Endothelial cell of umbilical vein (primary cell): ENCODE measurements at regions of chr19 and their contacts with region 1.

Region 1: GRCh38 chr19:17135001-17135853 is 59.6 kb downstream of the MYO9B start:
- DNase-seq: peak; percentile 99
- H3K4me3 ChIP-seq: peak overlapping the region in 1 of 3 experiments; percentile 15
- H3K27ac ChIP-seq: peak overlapping the region; percentile 98
- H3K4me1 ChIP-seq: peaks cover 24% of the 10 kb centered on the region
- H3K27me3 ChIP-seq: no peaks in the 10 kb centered on the region
- CTCF ChIP-seq: peak; percentile 11 to 26
- POLR2A ChIP-seq: peak; percentile 39

Region 2: DNA sequence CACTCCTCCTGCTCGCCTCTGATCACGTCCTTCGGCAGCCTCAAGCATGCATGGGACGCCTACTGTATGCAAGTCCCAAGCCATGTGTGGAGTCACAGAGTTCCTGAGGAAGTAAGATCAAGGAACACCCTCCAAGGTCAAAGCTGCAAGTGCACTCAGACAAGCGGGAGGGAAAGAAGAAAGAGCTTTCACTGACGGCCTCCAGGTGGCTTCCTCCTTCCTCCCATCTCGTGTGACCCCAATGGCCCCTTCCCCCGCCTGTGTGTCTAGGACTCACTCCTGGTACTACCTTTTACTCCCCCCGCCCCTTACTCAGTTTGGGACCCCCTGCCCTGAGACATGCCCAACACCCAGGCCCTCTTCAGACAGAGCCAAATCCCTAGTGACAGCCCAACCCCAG is 66.0 kb before region 1 on chr19:
- CTCF ChIA-PET with region 1: no interaction called
- POLR2A ChIA-PET with region 1: no interaction called
- dilution Hi-C with region 1: no loop called
- intact Hi-C with region 1: loop called (anchors 2 kb)
- DNase-seq: no peak
- H3K4me3 ChIP-seq: no peak overlapping the region
- H3K27ac ChIP-seq: no peak overlapping the region
- H3K4me1 ChIP-seq: peaks cover 8% of the 10 kb centered on the region
- H3K27me3 ChIP-seq: no peaks in the 10 kb centered on the region
- CTCF ChIP-seq: no peak
- POLR2A ChIP-seq: no peak

Region 3: DNA sequence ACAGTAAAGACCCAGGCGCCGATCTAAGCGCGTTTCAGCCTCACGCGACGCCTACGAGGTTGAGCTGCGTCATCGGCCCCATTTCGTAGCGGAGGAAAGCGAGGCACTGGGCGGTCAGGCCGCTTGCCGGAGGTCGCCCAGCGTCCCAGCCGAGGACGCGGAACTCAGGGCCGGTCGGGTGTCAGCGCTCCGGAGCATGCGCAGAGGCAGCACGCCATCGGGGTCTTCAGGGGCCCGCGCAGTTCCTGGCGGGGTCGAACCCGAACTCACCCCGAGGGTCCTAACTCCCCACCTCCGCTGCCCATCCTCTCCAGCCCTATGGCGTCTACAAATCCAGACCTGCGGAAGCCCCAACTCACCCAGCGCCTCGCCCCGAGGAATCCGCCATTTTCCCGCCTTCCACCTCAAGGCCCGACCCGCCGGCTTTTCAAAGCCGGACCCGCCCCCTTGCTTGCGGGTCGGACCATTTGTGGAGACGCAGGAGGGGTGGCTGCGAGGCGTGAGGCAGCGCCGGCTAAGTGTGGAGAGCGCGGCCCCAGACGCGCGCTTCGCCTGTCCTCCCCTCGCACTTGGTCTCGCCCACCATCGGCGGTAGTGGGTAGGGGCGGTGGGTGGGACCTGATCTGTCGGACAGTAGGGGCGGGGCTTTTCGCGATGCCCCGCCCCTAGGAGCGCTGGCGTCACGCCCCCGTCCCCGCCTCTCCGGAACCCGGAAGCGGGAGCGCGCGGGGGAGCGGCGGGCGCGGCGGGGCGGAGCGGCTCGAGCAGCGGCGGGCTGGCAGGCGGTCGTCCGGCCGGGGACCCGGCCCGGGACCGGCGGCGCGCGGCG is 60.0 kb before region 1 on chr19 and contains the starts of genes HAUS8 and MYO9B:
- CTCF ChIA-PET with region 1: no interaction called
- POLR2A ChIA-PET with region 1: no interaction called
- dilution Hi-C with region 1: no loop called
- intact Hi-C with region 1: loop called (anchors 1 kb)
- DNase-seq: peak; percentile 99
- H3K4me3 ChIP-seq: peak within 1 kb of the TSS; percentile 80 to 90 (median 89)
- H3K27ac ChIP-seq: peak within 1 kb of the TSS; percentile 75
- H3K4me1 ChIP-seq: peaks cover 41% of the 10 kb centered on the region
- H3K27me3 ChIP-seq: no peaks in the 10 kb centered on the region
- CTCF ChIP-seq: no peak
- POLR2A ChIP-seq: peak; percentile 72
- total RNA-seq, gene HAUS8: 23.4 and 30.3 TPM in 2 replicates
- total RNA-seq, gene MYO9B: 119 and 124 TPM in 2 replicates

Region 4: DNA sequence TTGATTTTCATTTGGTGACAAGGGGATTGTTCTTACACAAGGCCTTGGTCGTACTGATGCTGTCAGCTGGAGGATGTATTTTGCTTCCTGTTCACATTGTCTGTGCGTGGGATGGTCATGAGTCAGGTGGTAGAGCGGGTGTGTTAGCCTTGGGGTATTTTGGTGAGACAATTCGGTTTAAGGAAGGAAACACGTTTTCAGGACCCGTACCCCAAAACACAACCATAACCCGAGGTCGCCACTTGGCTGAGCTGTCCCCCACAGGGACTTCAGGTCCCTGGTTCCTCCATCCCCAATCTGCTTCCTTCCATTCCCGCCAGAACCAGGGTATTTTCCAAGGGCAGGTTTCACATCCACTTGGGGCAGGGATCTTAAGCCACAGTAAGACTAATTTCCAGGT is 44.6 kb before region 1 on chr19:
- CTCF ChIA-PET with region 1: no interaction called
- POLR2A ChIA-PET with region 1: interaction called, 10 read pairs
- dilution Hi-C with region 1: no loop called
- intact Hi-C with region 1: no loop called
- DNase-seq: no peak
- H3K4me3 ChIP-seq: no peak overlapping the region
- H3K27ac ChIP-seq: peak overlapping the region; percentile 4
- H3K4me1 ChIP-seq: peaks cover 23% of the 10 kb centered on the region
- H3K27me3 ChIP-seq: no peaks in the 10 kb centered on the region
- CTCF ChIP-seq: no peak
- POLR2A ChIP-seq: no peak

Region 5: GRCh38 chr19:17107525-17108452 is 27.4 kb before region 1 on chr19:
- CTCF ChIA-PET with region 1: interaction called, 3 read pairs
- POLR2A ChIA-PET with region 1: no interaction called
- dilution Hi-C with region 1: no loop called
- intact Hi-C with region 1: loop called (anchors 1 kb)
- DNase-seq: peak; percentile 96
- H3K4me3 ChIP-seq: no peak overlapping the region
- H3K27ac ChIP-seq: peak overlapping the region; percentile 80
- H3K4me1 ChIP-seq: peaks cover 11% of the 10 kb centered on the region
- H3K27me3 ChIP-seq: no peaks in the 10 kb centered on the region
- CTCF ChIP-seq: no peak
- POLR2A ChIP-seq: no peak

Region 6: DNA sequence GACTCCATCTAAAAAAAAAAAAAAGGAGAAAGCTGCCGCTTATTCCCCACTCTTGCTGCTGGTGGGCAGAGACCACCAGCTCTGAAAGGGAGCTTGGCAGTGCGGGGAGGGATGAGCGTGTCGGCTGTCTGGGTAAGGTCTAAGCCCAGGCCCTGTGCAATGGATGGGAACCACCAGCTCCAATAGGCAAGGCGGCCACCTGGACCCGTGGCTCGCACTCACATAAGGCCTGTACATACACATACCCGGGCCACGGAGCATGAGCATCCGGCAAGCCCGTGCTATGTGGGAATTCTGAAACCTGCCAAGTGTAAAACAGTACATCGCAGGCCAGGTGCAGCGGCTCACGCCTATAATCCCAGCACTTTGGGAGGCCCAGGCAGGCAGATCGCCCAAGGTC is 23.4 kb after region 1 on chr19:
- CTCF ChIA-PET with region 1: no interaction called
- POLR2A ChIA-PET with region 1: no interaction called
- dilution Hi-C with region 1: no loop called
- intact Hi-C with region 1: loop called (anchors 1 kb)
- DNase-seq: no peak
- H3K4me3 ChIP-seq: no peak overlapping the region
- H3K27ac ChIP-seq: no peak overlapping the region
- H3K4me1 ChIP-seq: no peaks in the 10 kb centered on the region
- H3K27me3 ChIP-seq: no peaks in the 10 kb centered on the region
- CTCF ChIP-seq: no peak
- POLR2A ChIP-seq: no peak